Sigmoid colon (tissue), 7 donors: ENCODE measurements at regions of chr5 and their contacts with region 1.

Region 1: DNA sequence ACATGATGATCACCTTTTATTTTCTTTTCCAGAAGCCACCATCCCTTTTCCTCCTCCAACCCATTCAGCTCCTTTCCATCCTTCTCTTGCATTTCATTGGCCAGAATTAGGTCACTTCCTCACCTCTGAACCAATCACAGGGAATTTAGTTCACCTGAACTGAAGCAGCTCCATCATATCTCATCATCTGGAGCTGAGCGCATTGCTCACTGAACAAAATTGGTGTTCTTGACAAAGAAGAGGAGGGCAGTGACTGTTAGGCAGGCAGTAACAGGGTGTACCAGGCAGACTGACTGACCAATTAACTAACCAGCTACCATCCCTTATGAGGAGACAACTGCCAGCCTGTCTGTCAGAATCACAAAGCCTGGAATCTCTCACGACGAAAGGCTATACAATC is 1.8 kb upstream of the ZNF354A start:
- DNase-seq: no peak
- H3K4me3 ChIP-seq: no peak overlapping the region
- H3K27ac ChIP-seq: no peak overlapping the region
- H3K4me1 ChIP-seq: peaks cover 0 to 12% (median 7%) of the 10 kb centered on the region in 4 donors
- H3K27me3 ChIP-seq: no peaks in the 10 kb centered on the region
- CTCF ChIP-seq: no peak
- EP300 ChIP-seq: no peak
- POLR2A ChIP-seq: no peak

Region 2: DNA sequence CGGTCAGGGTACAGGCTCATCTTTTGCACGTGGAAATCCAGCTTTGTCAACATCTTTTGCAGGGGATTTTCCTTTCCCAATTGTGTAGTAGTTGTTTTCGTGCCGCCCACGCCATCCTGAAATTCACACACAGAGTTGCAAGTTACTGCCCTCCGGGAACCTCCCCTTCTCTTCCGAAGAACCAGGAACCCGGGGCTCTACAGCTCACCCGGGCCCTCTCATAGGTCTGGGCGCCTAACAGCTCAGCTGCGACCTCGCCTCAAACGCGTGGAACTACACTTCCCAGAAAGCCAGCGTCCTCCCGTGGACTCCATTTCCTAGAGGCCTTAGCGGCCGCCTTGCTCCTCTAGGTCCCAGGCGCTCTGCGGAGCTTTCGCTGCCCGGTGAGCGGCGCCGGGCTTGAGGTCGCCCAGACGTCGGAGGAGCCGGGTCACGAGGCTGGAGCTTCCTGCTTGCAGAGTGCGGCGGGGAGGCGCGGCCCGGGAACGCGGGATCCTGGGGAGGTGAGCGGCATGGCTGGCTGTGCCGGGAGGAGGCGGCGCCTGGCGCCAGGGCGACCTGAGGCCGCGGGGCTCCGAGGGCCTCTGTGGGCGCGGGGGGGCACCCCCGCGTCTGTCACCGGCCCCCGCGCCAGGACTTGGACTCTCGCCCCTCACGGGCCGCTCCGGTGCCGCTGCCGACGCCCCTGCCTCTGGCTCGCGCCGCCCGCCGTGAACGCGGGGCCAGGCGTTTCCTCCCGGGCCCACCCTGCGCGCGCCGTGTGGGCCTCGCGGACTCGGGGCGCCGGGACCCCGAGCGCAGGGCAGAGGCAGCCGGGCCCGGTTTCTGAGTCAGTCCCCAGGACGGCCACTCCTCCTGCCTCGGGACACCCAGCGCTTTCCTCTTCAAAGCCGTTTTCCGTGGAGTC is 127.6 kb after region 1 on chr5 and contains the start of gene ZNF354B:
- intact Hi-C with region 1: loop called (anchors 2 kb)
- DNase-seq: peak; percentile 94
- H3K4me3 ChIP-seq: peak within 1 kb of the TSS; percentile 63 to 98 (median 78)
- H3K27ac ChIP-seq: peak within 1 kb of the TSS; percentile 86 to 92 (median 87)
- H3K4me1 ChIP-seq: peaks cover 0 to 21% (median 14%) of the 10 kb centered on the region in 4 donors
- H3K27me3 ChIP-seq: no peaks in the 10 kb centered on the region
- CTCF ChIP-seq: no peak
- EP300 ChIP-seq: no peak
- POLR2A ChIP-seq: peak; percentile 34 to 42
- total RNA-seq, gene ZNF354B: 13.3 to 23.5 (median 18.6) TPM

Region 3: GRCh38 chr5:179023528-179024430 is 291.5 kb after region 1 on chr5 and contains the start of gene ZNF879:
- intact Hi-C with region 1: loop called (anchors 2 kb)
- DNase-seq: peak; percentile 97
- H3K4me3 ChIP-seq: peak within 1 kb of the TSS; percentile 43 to 97 (median 86)
- H3K27ac ChIP-seq: peak within 1 kb of the TSS; percentile 84 to 89 (median 88)
- H3K4me1 ChIP-seq: peaks cover 0 to 11% (median 8%) of the 10 kb centered on the region in 4 donors
- H3K27me3 ChIP-seq: no peaks in the 10 kb centered on the region
- CTCF ChIP-seq: no peak
- EP300 ChIP-seq: no peak
- POLR2A ChIP-seq: no peak
- total RNA-seq, gene ZNF879: 2.8 to 6.3 (median 4.7) TPM